B cell (primary cell): ENCODE measurements at regions of chr4 and their contacts with region 1.

Region 1: DNA sequence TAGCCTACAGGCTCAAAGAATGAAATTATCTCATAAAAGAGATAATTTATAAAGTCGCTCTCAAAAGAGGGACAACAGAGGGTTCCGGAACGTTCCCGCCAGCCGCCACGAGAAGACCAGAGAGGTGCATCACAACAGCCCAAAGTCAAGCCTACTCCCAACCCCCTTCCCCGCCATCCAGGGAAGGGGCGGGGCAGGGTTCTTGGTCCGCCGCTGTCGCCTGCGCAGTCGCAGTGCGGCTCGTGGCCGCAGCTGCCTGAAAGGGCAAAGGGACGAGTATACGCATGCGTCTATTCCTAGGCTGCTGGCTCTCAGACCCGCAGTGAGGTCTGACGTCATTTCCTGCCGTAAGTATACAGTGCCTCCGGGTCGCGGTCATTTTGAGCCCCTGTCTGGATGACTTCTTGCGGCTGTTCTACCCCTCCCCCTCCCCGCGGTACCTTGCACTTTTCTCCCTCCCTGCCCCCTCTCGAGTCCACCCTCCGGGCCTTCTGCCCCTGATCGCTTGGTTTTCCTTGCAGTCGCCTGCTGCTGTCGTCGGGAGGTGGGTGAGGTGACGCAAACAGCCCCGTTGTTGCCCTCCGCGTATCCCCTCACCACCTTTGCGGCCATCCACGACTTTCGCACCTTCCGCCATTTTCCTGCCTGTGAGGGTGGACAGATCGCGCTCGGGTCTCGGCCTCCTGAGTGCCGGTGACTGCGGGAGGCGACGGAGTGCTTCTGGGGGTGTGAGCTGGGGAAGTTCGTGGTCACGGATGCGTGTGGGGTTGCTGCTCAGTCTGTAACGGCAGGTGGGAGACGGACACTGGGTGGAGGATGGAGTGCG is at the start of gene OCIAD1:
- DNase-seq: peak; percentile 99
- ATAC-seq: peak; percentile 95
- H3K4me3 ChIP-seq: peak within 1 kb of the TSS; percentile 81 to 99 (median 93)
- H3K4me3 Mint-ChIP-seq: peak within 1 kb of the TSS; percentile 100
- H3K27ac ChIP-seq: peak within 1 kb of the TSS; percentile 96 to 98
- H3K27ac Mint-ChIP-seq: peak within 1 kb of the TSS; percentile 100
- H3K4me1 ChIP-seq: peaks cover 16% of the 10 kb centered on the region in 2 donors
- H3K4me1 Mint-ChIP-seq: peaks cover 21% of the 10 kb centered on the region
- H3K27me3 ChIP-seq: no peaks in the 10 kb centered on the region
- H3K27me3 Mint-ChIP-seq: no peaks in the 10 kb centered on the region
- CTCF ChIP-seq: no peak
- total RNA-seq, gene OCIAD1: 114 and 119 TPM in 2 replicates

Region 2: DNA sequence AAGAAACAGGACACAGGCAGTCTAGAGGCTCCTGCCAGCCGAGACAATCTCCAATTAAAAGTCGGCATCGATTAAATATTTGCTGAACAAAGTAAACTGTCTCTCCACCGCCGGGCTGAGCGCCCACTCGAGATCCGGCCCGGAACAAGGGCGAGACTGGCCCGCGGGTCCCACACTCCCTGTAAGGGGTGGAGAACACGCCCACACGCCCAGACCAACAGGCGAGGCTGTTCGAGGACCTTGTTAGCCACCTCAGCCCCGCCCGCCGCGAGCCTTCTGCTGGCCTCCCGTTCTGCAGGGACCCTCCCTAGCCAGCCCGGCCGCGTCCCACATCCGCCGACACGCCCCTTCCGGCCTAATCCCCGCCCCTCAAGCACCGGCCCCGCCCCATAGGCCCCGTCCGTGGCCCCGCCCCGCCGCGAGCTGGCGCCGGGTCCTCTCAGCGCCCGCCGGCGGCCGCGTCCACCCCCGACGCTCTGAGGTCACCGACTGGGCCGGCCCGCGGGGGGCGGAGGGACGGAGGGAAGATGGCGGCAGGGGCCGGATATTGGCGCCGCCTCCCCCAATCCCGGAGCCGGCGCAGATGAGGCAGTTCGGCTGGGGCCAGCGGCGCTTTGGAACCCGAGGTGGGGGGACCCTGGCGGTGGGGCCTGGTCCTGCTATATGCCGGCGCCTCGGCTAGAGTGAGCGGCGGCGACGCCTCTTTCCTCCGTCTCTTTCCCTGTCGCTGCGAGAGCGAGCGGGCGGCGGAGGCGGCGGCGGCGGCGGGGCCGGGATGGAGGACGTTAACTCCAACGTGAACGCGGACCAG is 489.7 kb before region 1 on chr4 and contains the start of gene SLAIN2:
- CTCF ChIA-PET with region 1: no interaction called
- POLR2A ChIA-PET with region 1: no interaction called
- intact Hi-C with region 1: loop called (anchors 1 kb)
- DNase-seq: peak; percentile 98
- ATAC-seq: peak; percentile 88
- H3K4me3 ChIP-seq: peak within 1 kb of the TSS; percentile 79 to 96 (median 83)
- H3K4me3 Mint-ChIP-seq: peak within 1 kb of the TSS; percentile 96
- H3K27ac ChIP-seq: peak within 1 kb of the TSS; percentile 93 to 94
- H3K27ac Mint-ChIP-seq: peak within 1 kb of the TSS; percentile 98
- H3K4me1 ChIP-seq: peaks cover 23 to 28% of the 10 kb centered on the region in 2 donors
- H3K4me1 Mint-ChIP-seq: peaks cover 43% of the 10 kb centered on the region
- H3K27me3 ChIP-seq: no peaks in the 10 kb centered on the region
- H3K27me3 Mint-ChIP-seq: no peaks in the 10 kb centered on the region
- CTCF ChIP-seq: peak; percentile 60
- total RNA-seq, gene SLAIN2: 69.1 and 69.2 TPM in 2 replicates

Region 3: DNA sequence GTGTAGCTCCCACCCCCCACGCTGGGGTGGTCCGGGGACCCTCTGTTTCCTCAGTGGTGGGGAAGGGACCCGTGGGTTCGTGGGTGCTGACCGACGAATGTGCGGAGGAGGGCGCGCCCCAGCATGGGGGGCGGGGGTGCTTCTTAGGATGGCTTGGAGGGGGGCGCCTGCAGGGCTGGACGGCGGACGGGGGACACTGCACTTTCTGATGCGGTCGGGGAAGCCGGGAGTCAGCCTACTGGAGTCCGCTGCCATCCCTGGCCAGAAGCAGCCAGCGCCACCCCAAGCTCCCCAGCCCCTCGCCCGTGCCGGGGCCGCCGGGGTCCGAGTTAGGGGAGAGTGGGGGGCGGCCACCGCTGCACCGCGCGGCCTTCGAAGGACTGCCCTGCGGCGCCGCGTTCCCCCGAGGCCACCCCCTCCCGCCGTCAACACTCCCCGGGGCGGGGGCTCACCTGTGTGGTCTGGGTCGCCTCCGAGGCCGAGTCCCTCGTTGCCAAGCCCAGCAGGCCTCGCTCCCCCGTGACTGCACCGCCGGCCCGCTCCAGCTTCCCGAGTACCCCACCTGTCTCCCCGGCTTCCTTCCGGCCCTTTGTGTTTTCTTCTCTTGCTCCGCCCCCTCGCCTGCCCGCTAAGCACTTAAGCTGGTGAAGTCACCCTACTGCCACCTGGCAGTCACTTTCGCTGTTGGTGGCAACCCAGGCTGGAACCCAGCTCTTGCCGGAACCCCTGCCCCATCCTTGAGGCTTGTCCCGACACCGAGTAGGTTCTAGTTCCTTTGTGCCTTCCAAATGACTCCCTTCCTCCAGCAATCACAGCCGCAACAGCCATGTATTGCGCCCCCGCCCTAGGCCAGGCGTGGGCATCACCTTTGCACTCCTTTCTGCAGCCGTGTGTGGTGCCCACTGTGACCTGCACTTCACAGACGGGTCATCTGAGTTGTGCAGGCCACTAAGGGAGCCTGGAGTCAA is 75.6 kb after region 1 on chr4 and contains the start of gene OCIAD2:
- CTCF ChIA-PET with region 1: no interaction called
- POLR2A ChIA-PET with region 1: no interaction called
- intact Hi-C with region 1: loop called (anchors 1 kb)
- DNase-seq: peak; percentile 88
- ATAC-seq: peak; percentile 97
- H3K4me3 ChIP-seq: peak within 1 kb of the TSS; percentile 36 to 80 (median 71)
- H3K4me3 Mint-ChIP-seq: peak within 1 kb of the TSS; percentile 93
- H3K27ac ChIP-seq: peak within 1 kb of the TSS; percentile 58 to 82
- H3K27ac Mint-ChIP-seq: peak within 1 kb of the TSS; percentile 86
- H3K4me1 ChIP-seq: peaks cover 16 to 20% of the 10 kb centered on the region in 2 donors
- H3K4me1 Mint-ChIP-seq: peaks cover 27% of the 10 kb centered on the region
- H3K27me3 ChIP-seq: no peaks in the 10 kb centered on the region
- H3K27me3 Mint-ChIP-seq: no peaks in the 10 kb centered on the region
- CTCF ChIP-seq: peak; percentile 51
- total RNA-seq, gene OCIAD2: 37.0 and 39.3 TPM in 2 replicates